Cardiac septum (tissue), 1 donor: ENCODE measurements at regions of chr6 and their contacts with region 1.

Region 1: GRCh38 chr6:90179190-90180169 is 117.2 kb downstream of the BACH2 start:
- DNase-seq: no peak

Region 2: DNA sequence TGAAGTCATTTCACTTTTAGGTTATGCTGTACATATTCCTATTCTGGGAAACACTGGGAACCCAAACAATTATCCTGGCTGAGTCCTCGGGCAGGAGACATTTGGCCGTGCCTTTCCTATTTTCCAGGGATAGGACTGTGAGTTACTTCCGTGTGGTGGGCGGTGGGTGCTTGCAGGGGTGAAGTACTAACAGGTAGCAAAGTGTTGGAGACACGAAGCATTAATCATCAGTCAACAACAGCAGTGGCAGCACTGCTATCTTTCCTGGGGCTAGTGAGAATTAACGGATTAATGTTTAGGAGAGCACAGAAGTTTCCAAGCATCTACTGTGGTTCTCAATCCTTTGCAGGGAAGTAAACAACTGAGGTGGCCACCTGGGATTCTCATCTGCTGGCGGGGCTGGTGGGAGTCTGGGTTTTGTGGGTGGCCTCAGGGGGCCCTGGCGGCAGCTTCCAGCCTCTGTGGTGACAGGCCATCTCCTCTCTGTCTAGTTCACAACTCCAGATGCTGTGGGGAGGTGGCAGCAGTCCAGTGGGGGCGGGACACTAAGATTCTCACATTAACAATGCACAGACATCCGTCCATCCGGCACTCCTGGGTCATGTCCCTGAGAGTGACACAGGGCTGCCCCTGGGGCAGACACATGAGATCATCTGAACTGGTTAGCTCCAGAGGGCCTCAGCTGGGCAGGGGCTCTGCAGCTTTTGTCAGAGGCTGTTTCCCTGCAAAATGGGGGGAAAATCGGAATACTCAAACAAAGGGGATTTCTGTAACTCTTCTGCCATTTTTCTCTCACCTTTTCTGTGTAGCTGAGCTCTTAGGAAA is 194.3 kb before region 1 on chr6:
- intact Hi-C with region 1: loop called (anchors 5 kb)
- DNase-seq: peak; percentile 92

Region 3: GRCh38 chr6:90230548-90231215 is 51.2 kb after region 1 on chr6:
- intact Hi-C with region 1: no loop called
- DNase-seq: no peak